H1 (cell line): ENCODE measurements at regions of chr6 and their contacts with region 1.

Region 1: GRCh38 chr6:39088331-39088730 is 26.7 kb downstream of the SAYSD1 start:
- DNase-seq: peak in 1 of 2 experiments; percentile 50
- H3K4me3 ChIP-seq: peak overlapping the region in 1 of 4 experiments; percentile 5; a peak in 2 of 8 replicates
- H3K27ac ChIP-seq: no peak overlapping the region
- H3K4me1 ChIP-seq: peaks cover 10 to 35% (median 12%) of the 10 kb centered on the region in 4 experiments
- H3K27me3 ChIP-seq: no peaks in the 10 kb centered on the region
- CTCF ChIP-seq: peak; percentile 56 to 73 (median 67)
- EP300 ChIP-seq: no peak; a peak in 1 of 3 replicates
- POLR2A ChIP-seq: no peak
- RAD21 ChIP-seq: peak; percentile 61 to 74

Region 2: GRCh38 chr6:38871741-38872568 is 216.4 kb before region 1 on chr6:
- CTCF ChIA-PET with region 1: interaction called, 37 read pairs
- POLR2A ChIA-PET with region 1: no interaction called
- DNase-seq: peak; percentile 39 to 86
- H3K4me3 ChIP-seq: no peak overlapping the region
- H3K27ac ChIP-seq: no peak overlapping the region
- H3K4me1 ChIP-seq: no peaks in the 10 kb centered on the region; a peak in 1 of 7 replicates
- H3K27me3 ChIP-seq: no peaks in the 10 kb centered on the region
- CTCF ChIP-seq: peak; percentile 73 to 96 (median 91)
- EP300 ChIP-seq: no peak
- POLR2A ChIP-seq: no peak
- RAD21 ChIP-seq: peak; percentile 92 to 96

Region 3: DNA sequence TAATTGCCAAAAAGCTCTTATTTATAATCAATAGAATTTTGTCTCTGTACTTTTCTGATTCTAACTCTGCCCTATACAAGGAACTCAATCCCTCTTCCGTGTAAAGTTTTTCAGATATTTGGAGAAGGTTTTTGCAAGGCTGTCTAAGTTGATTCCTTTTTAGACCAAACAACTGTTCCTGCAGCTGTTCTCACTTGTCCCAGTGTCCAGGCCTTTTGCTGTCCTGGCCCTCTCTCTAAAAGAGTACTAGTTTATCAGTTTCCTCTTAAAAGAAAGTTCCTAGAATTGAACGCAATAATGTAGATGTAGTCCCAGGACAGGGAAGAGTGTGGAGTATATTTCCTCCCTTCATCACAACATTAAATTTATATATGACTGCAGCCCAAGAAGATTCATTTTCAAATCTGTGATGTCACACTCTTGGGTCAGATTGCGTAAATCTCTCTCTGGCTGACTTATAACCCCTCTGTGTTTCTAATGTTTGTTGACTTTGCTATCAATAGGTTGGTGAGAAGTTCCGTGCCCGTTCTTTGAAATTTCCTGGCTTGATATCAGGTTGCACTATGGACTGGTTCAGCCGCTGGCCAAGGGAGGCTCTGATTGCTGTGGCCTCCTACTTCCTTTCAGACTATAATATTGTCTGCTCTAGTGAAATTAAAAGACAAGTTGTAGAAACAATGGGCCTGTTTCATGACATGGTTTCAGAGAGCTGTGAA is 179.2 kb before region 1 on chr6:
- CTCF ChIA-PET with region 1: no interaction called
- POLR2A ChIA-PET with region 1: no interaction called
- DNase-seq: no peak
- H3K4me3 ChIP-seq: no peak overlapping the region
- H3K27ac ChIP-seq: no peak overlapping the region
- H3K4me1 ChIP-seq: no peaks in the 10 kb centered on the region
- H3K27me3 ChIP-seq: no peaks in the 10 kb centered on the region
- CTCF ChIP-seq: no peak
- EP300 ChIP-seq: no peak
- POLR2A ChIP-seq: no peak
- RAD21 ChIP-seq: no peak

Region 4: DNA sequence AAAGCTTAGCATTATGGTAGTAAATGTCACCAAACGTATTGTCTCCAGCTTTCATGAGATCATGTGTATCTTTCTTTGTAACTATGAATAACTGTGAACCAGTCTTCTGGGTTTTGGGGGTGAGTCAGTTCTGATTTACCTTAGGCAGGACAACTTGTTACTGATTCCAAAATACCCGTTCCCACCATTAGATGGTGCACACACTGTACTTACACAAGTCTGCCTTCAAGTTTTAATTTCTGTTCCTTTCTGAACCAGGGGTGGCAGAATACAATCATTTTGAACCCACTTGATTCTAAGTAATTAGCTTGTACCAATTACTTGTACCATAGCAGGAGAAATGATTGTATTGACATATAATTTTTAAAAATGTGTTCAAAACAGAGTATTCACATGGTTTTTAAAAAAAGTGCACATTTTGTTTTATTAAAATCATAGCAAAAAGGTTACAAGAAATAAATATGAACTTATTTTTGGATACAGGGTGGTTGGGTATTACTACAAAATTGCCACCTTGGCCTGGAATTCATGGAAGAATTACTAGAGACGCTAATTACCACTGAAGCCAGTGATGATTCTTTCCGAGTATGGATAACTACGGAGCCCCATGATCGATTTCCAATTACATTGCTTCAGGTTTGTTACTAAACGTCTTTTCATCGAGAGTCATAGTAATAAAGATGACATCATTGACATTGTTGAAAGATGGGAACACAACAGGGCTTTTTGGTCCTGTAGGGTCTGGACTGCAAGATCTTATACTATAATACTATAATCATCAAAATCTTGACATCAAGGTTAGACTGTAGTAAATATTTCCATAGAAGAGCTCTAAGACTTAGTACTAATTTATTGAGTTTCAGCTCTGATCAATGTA is 114.9 kb before region 1 on chr6:
- CTCF ChIA-PET with region 1: interaction called, 13 read pairs
- POLR2A ChIA-PET with region 1: no interaction called
- DNase-seq: no peak
- H3K4me3 ChIP-seq: no peak overlapping the region
- H3K27ac ChIP-seq: no peak overlapping the region
- H3K4me1 ChIP-seq: peaks cover 0 to 3% (median 2%) of the 10 kb centered on the region in 4 experiments; a peak in 4 of 7 replicates
- H3K27me3 ChIP-seq: no peaks in the 10 kb centered on the region
- CTCF ChIP-seq: peak in 2 of 3 experiments; percentile 68 to 92; a peak in 3 of 4 replicates
- EP300 ChIP-seq: no peak
- POLR2A ChIP-seq: no peak
- RAD21 ChIP-seq: peak; percentile 71 to 77

Region 5: GRCh38 chr6:39029156-39030011 is 58.9 kb before region 1 on chr6:
- CTCF ChIA-PET with region 1: interaction called, 32 read pairs
- POLR2A ChIA-PET with region 1: no interaction called
- DNase-seq: peak in 1 of 2 experiments; percentile 93
- H3K4me3 ChIP-seq: no peak overlapping the region
- H3K27ac ChIP-seq: no peak overlapping the region
- H3K4me1 ChIP-seq: peaks cover 0 to 4% (median 0%) of the 10 kb centered on the region in 4 experiments; a peak in 1 of 7 replicates
- H3K27me3 ChIP-seq: no peaks in the 10 kb centered on the region; a peak in 1 of 7 replicates
- CTCF ChIP-seq: peak; percentile 81 to 97 (median 97)
- EP300 ChIP-seq: no peak
- POLR2A ChIP-seq: no peak
- RAD21 ChIP-seq: peak; percentile 70 to 79

Region 6: GRCh38 chr6:39048481-39049399 is 39.6 kb before region 1 on chr6 and contains the start of gene GLP1R:
- CTCF ChIA-PET with region 1: interaction called, 12 read pairs
- POLR2A ChIA-PET with region 1: interaction called, 3 read pairs
- DNase-seq: peak in 1 of 2 experiments; percentile 82
- H3K4me3 ChIP-seq: peak within 1 kb of the TSS; percentile 65 to 85 (median 72)
- H3K27ac ChIP-seq: no peak within 1 kb of the TSS
- H3K4me1 ChIP-seq: peaks cover 0 to 6% (median 4%) of the 10 kb centered on the region in 4 experiments; a peak in 5 of 7 replicates
- H3K27me3 ChIP-seq: peaks cover 3 to 39% (median 33%) of the 10 kb centered on the region in 4 experiments
- CTCF ChIP-seq: no peak
- EP300 ChIP-seq: no peak
- POLR2A ChIP-seq: no peak
- RAD21 ChIP-seq: no peak
- total RNA-seq, gene GLP1R: 2.6 and 3.0 TPM in 2 replicates

Region 7: DNA sequence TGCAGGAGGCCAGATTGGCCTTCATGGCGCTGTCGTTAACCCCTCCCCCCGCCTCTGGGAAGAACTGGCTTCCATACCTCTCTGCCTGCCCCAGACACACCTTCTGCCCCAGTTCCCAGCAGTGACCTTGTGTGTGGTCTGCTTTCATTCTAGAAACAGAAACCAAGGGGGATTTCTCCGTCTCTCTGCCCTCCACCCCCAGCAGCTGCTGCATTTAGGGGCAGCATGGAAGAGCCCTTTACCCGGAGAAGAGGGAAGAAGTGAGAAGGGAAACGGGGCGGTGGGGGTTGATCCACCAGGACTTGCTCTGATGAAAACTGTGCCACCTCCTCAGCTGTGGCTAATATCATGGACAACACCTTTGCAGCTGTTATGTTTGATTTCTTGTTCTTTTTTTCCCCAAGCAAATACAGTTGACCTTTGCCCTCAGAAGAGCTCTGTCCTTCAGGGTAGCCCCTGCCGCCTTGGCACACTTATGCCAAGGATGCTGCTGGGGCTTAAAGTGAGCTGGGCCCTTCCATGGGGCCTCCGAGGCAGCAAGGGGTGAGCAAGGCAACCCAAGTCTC is 33.7 kb before region 1 on chr6:
- CTCF ChIA-PET with region 1: interaction called, 10 read pairs
- POLR2A ChIA-PET with region 1: interaction called, 3 read pairs
- DNase-seq: no peak
- H3K4me3 ChIP-seq: no peak overlapping the region
- H3K27ac ChIP-seq: no peak overlapping the region
- H3K4me1 ChIP-seq: peaks cover 0 to 13% (median under 1%) of the 10 kb centered on the region in 4 experiments; a peak in 4 of 7 replicates
- H3K27me3 ChIP-seq: peaks cover 0 to 11% (median 6%) of the 10 kb centered on the region in 4 experiments; a peak in 6 of 7 replicates
- CTCF ChIP-seq: no peak
- EP300 ChIP-seq: no peak
- POLR2A ChIP-seq: no peak
- RAD21 ChIP-seq: no peak

Region 8: DNA sequence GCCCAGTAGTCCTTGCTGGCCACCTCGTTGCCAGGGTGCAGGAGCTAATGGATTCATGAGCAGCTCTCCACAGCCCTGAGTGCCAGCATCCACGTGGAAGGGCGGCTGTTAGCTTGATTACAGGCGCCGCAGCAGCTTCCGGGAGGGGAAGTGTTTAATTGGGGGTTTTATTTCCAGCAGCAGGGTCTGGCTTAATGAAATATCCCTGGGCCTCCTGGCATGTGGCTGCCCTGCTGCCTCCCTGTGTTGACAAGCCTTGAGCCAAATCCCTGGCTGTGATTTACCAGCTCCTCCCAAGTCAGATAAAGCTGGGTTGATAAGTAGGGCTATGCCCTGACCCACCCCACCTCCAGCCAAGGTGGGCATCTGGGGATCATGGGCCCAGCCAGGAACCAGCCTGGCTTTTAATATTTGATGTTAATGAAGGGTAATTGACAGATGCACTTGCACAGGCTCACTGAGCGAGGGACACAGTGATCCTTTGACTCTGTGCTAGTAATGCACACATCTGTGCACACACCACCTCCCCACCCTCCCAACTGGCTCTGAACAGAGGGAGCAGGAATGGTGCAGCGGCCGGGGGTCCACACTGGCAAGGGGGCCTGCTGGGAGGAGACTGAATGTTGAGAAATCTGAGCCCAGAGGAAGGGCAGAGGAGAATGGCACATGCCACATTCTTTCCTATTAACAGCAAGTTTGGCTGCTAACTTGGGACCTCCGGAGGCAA is 26.2 kb before region 1 on chr6:
- CTCF ChIA-PET with region 1: interaction called, 23 read pairs
- POLR2A ChIA-PET with region 1: interaction called, 3 read pairs
- DNase-seq: no peak
- H3K4me3 ChIP-seq: no peak overlapping the region
- H3K27ac ChIP-seq: no peak overlapping the region
- H3K4me1 ChIP-seq: no peaks in the 10 kb centered on the region
- H3K27me3 ChIP-seq: 0 out of 7 replicates have a peak, but pooled peaks cover 0 to under 1% (median 0%) of the 10 kb centered on the region in 4 experiments
- CTCF ChIP-seq: no peak
- EP300 ChIP-seq: no peak
- POLR2A ChIP-seq: no peak
- RAD21 ChIP-seq: no peak